ENCODE measurements at regions of chr19 and their contacts with region 1.

Region 1: DNA sequence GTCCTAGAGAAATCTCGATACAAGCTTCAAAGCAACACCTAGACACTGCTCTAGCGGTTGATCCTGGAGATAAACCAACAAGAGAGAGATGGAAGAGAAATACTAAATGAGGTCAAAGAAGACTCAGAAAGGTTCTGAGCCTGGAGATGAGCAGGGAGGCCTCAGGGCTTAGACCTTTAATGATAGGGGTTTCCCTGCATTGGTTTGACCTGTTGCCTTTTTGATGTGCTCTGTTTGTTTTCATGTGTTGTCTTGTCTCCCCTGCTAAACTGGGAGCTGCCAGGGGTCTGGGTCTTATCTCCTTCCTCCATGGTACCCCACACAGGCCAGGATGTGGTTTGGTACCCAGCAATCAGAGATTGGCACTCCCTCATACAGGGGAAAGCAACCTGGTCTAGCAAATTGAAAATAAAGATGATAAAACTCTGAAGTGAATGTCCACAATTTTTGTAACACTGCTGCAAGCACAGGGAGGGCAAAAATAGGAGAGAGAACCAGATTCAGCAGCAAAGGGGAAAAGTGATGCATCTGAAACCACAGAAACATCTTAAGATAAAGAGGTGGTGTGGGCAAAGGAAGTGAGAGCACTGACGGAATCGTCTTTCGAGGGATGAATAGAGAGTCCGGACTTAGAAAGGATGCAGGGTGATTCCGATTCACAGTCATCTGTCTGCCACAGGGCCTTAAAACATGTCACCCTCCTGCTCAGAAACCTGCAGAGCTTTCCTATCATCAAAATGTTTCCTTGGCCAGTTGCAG is 3.5 kb downstream of the FFAR2 start:
- DNase-seq: peak; percentile 14
- H3K4me3 Mint-ChIP-seq: peak overlapping the region; percentile 10
- H3K27ac Mint-ChIP-seq: peak overlapping the region; percentile 88
- H3K4me1 Mint-ChIP-seq: peaks cover 39% of the 10 kb centered on the region
- H3K27me3 Mint-ChIP-seq: peaks cover 32% of the 10 kb centered on the region

Region 2: DNA sequence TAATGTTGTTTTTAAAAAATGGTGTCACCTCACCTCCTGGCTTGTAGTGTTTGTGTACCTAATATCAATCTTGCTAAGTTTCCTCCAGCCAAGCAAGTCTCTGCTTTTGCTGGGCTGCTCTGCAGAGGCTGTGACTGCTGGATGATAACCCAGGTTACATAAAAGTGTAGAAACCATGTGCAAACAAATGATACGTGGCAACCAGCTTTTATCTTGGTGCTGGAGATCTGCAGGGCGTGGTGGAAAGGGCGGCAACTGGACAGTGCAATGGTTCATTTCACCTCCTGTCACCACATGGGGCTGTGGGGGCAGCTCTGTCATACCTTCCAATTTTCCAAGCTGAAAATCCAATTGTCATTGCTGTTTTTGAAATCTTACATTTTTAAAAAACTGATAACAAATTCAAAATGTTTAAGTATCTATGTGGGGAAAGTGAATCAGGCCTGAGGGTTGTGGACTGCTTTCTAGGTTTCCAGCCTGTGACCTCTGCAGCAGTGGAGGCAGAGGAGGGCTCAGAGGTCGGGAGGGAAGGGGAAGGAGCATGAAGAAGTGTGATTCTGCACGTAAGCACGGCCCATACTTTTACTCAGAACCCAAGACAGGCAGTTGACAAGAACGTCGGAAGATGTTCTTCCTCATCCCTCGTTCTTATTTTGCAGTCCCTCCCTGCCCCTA is 70.9 kb before region 1 on chr19:
- intact Hi-C with region 1: no loop called
- DNase-seq: no peak
- H3K4me3 Mint-ChIP-seq: no peak overlapping the region
- H3K27ac Mint-ChIP-seq: no peak overlapping the region
- H3K4me1 Mint-ChIP-seq: peaks cover 3% of the 10 kb centered on the region
- H3K27me3 Mint-ChIP-seq: peaks cover 13% of the 10 kb centered on the region

Region 3: DNA sequence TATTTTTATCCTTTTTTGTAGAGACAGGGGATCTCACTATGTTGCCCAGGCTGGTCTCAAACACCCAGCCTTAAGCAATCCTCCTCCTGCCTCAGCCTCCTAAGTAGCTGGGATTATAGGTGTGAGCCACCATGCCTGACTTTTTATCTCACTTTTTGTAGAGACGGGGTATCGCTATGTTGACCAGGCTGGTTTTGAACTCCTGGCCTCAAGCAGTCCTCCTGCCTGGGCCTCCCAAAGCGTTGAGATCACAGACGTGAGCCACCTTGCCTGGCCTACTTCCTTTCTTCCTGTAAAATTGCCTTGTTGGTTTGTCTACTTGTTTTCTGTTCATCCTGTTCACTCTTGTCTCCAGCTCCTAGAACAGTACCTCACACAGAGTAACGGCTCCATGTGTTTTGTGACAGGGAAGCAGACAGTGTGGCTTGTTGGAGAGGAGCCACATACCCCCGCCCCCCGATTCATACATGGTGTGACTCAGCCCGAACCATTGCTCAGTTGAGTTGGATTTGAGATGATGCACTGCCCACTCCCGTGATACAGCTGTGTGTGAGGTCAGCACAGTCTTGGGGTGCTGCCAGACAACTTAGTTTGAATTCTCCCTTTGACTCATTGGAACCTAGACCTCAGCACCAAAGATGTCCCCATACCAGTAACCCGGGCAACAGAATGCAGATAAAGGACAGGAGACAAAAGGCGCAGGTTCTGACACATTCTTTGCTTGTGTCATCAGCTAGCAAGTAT is 46.5 kb before region 1 on chr19:
- intact Hi-C with region 1: loop called (anchors 1 kb)
- DNase-seq: peak; percentile 20
- H3K4me3 Mint-ChIP-seq: no peak overlapping the region
- H3K27ac Mint-ChIP-seq: peak overlapping the region; percentile 80
- H3K4me1 Mint-ChIP-seq: peaks cover 22% of the 10 kb centered on the region
- H3K27me3 Mint-ChIP-seq: peaks cover 11% of the 10 kb centered on the region

Region 4: GRCh38 chr19:35436477-35437405 is 14.8 kb before region 1 on chr19:
- intact Hi-C with region 1: loop called (anchors 1 kb)
- DNase-seq: no peak
- H3K4me3 Mint-ChIP-seq: peak overlapping the region; percentile 42
- H3K27ac Mint-ChIP-seq: peak overlapping the region; percentile 44
- H3K4me1 Mint-ChIP-seq: peaks cover 20% of the 10 kb centered on the region
- H3K27me3 Mint-ChIP-seq: peaks cover 26% of the 10 kb centered on the region

Region 5: GRCh38 chr19:35462476-35462953 is 11.0 kb after region 1 on chr19:
- intact Hi-C with region 1: loop called (anchors 1 kb)
- DNase-seq: peak; percentile 60
- H3K4me3 Mint-ChIP-seq: peak overlapping the region; percentile 60
- H3K27ac Mint-ChIP-seq: peak overlapping the region; percentile 88
- H3K4me1 Mint-ChIP-seq: peaks cover 45% of the 10 kb centered on the region
- H3K27me3 Mint-ChIP-seq: peaks cover 4% of the 10 kb centered on the region

Region 6: GRCh38 chr19:35468637-35469036 is 17.1 kb after region 1 on chr19:
- intact Hi-C with region 1: loop called (anchors 2 kb)
- DNase-seq: peak; percentile 47
- H3K4me3 Mint-ChIP-seq: no peak overlapping the region
- H3K27ac Mint-ChIP-seq: no peak overlapping the region
- H3K4me1 Mint-ChIP-seq: peaks cover 14% of the 10 kb centered on the region
- H3K27me3 Mint-ChIP-seq: peaks cover 4% of the 10 kb centered on the region

Region 7: GRCh38 chr19:35748106-35749020 is 296.8 kb after region 1 on chr19 and contains the start of gene LIN37:
- intact Hi-C with region 1: no loop called
- DNase-seq: peak; percentile 98
- H3K4me3 Mint-ChIP-seq: peak within 1 kb of the TSS; percentile 95
- H3K27ac Mint-ChIP-seq: peak within 1 kb of the TSS; percentile 90
- H3K4me1 Mint-ChIP-seq: peaks cover 31% of the 10 kb centered on the region
- H3K27me3 Mint-ChIP-seq: no peaks in the 10 kb centered on the region
- total RNA-seq, gene LIN37: 9.9 and 10.0 TPM in 2 replicates